Right lobe of liver (tissue), 6 donors: ENCODE measurements at regions of chrX and their contacts with region 1.

Region 1: GRCh38 chrX:20442597-20442996 is 175.9 kb upstream of the RPS6KA3 start:
- DNase-seq: peak; percentile 76 to 79 (median 77)
- ATAC-seq: peak; percentile 91 to 95 (median 92)
- H3K4me3 ChIP-seq: no peak overlapping the region
- H3K27ac ChIP-seq: no peak overlapping the region
- H3K4me1 ChIP-seq: peaks cover 0 to 2% (median 0%) of the 10 kb centered on the region in 4 donors
- H3K27me3 ChIP-seq: no peaks in the 10 kb centered on the region
- CTCF ChIP-seq: peak; percentile 64 to 75 (median 68)
- POLR2A ChIP-seq: no peak

Region 2: DNA sequence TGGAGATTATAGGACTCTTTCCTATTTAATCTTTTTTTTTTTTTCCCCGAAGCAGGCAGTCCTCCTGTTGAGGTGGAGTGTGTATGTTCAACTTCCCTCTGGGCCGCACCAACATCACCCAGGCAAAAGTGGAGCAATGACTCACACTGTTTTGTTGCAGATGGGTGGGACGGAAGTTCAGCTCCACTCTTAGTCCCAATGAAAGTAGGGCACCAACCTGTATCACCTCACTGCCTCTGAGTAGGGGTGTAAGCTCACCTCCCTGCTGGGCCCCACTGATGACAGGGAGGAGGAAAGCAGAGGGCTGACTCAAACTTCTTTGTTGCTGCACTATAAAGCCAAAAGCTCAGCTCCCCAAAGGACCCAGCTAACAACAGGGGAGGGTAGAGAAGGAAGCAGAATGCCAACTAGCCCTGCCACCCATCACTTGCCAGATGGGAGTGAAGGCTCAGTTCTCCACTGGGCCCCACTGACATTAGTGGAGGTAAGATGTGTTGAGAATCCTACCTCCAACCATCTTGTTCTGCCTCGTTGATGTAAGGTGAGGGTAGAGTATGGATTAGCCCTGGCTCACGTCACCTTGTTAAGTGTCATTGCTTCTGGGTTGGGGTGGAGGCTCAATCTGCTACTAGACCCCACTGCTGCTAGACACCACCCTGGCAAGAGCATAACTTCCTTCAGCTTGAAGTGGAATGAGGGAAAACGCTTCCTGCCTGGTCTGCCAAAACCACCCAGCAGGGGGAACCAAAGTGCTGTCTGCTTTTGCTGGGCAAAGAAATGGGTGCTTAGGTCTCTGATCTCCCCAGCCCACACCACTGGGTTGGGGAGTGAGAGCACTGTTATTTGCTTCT is 190.0 kb before region 1 on chrX:
- intact Hi-C with region 1: loop called in 1 of 2 experiments (anchors 10 kb)
- DNase-seq: peak; percentile 48 to 60 (median 58)
- ATAC-seq: peak; percentile 93 to 98 (median 96)
- H3K4me3 ChIP-seq: no peak overlapping the region
- H3K27ac ChIP-seq: no peak overlapping the region
- H3K4me1 ChIP-seq: no peaks in the 10 kb centered on the region
- H3K27me3 ChIP-seq: no peaks in the 10 kb centered on the region
- CTCF ChIP-seq: peak; percentile 62 to 67 (median 65)
- POLR2A ChIP-seq: no peak